Activated CD4-positive, alpha-beta T cell treated with anti-CD3 and anti-CD28 coated beads, Interleukin-2, amount 10 ng/mL, durations not matched to agents 24 days and 14 days (primary cell): ENCODE measurements at regions of chr19 and their contacts with region 1.

Region 1: DNA sequence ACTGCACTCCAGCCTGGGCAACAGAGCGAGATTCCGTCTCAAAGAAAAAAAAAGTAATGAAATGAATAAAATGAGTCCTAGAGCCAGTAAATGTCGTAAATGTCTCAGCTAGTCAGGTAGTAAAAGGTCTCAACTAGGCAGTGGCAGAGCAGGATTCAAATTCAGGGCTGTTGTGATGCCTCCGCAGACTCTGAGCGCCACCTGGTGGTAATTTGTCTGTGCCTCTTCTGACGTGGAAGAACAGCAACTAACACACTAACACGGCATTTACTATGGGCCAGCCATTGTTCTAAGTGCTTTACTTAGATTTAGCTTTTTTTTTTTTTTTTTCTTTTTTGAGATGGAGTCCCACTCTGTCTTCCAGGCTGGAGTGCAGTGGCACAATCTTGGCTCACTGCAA is 30.2 kb downstream of the CYP2F1 start:
- DNase-seq: peak; percentile 96
- H3K4me3 Mint-ChIP-seq: no peak overlapping the region
- H3K27ac Mint-ChIP-seq: no peak overlapping the region
- H3K4me1 Mint-ChIP-seq: no peaks in the 10 kb centered on the region
- H3K27me3 Mint-ChIP-seq: peaks cover 21% of the 10 kb centered on the region

Region 2: GRCh38 chr19:40974633-40975037 is 169.8 kb before region 1 on chr19:
- intact Hi-C with region 1: loop called (anchors 1 kb)
- DNase-seq: peak; percentile 93
- H3K4me3 Mint-ChIP-seq: no peak overlapping the region
- H3K27ac Mint-ChIP-seq: no peak overlapping the region
- H3K4me1 Mint-ChIP-seq: peaks cover 35% of the 10 kb centered on the region
- H3K27me3 Mint-ChIP-seq: peaks cover 18% of the 10 kb centered on the region

Region 3: GRCh38 chr19:41123716-41124294 is 20.6 kb before region 1 on chr19:
- intact Hi-C with region 1: loop called (anchors 1 kb)
- DNase-seq: no peak
- H3K4me3 Mint-ChIP-seq: no peak overlapping the region
- H3K27ac Mint-ChIP-seq: no peak overlapping the region
- H3K4me1 Mint-ChIP-seq: peaks cover 30% of the 10 kb centered on the region
- H3K27me3 Mint-ChIP-seq: peaks cover 15% of the 10 kb centered on the region